A549 (cell line): ENCODE measurements at regions of chr6 and their contacts with region 1.

Region 1: DNA sequence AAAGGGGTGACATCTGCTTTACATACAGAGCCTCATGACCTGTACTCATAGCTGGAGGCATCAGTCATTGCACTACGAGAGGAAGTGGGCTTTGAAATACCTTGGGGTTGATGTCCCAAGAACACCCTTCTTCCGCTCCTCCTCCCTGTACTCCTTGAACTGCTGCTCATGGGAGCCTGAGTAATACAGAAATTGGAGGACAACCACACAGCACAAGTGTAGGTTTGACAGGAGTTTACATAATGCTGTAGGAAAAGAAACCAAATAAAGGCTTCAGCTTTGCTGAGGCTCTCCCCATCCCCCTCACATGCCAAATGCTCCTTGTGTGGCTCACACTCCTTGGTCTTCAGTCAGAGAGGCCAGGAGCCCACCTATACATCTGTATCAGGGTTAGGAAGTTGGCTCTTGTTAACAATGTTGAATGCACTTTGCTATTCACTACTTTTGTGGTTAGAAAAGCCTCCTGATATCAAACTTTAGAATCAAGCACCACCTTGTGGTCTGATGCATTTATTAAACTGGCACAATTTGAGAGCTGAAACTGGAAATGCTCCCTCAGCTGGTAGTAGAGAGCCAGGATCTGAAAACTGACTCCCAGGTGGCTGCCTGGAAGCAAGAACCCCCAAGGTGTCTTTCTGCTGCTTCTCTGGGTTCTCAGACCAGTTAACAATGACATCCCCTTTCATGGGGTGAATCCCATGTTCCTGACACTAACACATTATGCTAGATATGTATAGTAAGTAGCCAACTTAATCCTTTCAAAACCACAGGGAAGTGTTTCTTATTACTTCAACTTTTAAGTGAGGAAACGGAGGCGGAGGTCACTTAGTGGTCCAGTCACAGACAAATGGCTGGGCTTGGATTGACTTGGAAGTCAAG is 56.2 kb upstream of the EDN1 start:
- DNase-seq: peak; percentile 27 to 71
- ATAC-seq: peak; percentile 77 to 85
- H3K4me3 ChIP-seq: no peak overlapping the region
- H3K27ac ChIP-seq: peak overlapping the region in 1 of 2 experiments; percentile 53; a peak in 2 of 6 replicates
- H3K4me1 ChIP-seq: 0 out of 3 replicates have a peak, but pooled peaks cover 3% of the 10 kb centered on the region
- CTCF ChIP-seq: peak; percentile 87
- EP300 ChIP-seq: no peak
- POLR2A ChIP-seq: no peak
- RAD21 ChIP-seq: peak; percentile 78 to 80

Region 2: DNA sequence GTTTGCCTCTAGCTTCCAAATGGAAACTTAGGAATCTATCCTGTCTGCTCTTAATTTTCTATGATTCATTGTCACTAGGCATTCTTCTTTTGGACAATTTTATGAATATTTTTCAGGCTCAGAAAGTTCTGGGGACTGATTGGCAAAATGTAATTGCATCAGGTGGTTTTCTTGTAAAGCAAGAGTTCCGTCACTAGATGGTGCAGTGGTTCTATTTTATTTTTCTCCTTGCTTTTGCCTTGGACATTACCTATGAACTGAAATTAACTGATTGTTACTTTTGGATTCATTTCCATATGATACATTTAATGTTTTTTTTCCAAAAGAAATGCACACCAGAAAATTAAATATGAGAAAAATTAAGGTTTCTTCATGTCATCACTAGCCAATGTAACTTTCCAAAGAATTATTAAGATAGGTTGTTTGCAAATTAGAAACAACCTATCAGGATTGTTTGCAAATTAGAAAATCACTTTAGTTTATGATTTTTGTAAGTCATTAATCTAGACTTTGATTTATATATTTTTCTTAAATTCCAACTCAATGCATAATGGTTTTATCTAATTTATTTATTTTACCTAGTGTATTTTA is 648.4 kb before region 1 on chr6:
- CTCF ChIA-PET with region 1: interaction called, 17 read pairs
- POLR2A ChIA-PET with region 1: no interaction called
- DNase-seq: peak; percentile 28 to 58
- ATAC-seq: peak in 1 of 2 experiments; percentile 56; a peak in 2 of 6 replicates
- H3K4me3 ChIP-seq: no peak overlapping the region
- H3K27ac ChIP-seq: peak overlapping the region; percentile 60 to 77; a peak in 5 of 6 replicates
- H3K4me1 ChIP-seq: peaks cover 33% of the 10 kb centered on the region
- CTCF ChIP-seq: peak; percentile 72
- EP300 ChIP-seq: no peak
- POLR2A ChIP-seq: no peak
- RAD21 ChIP-seq: peak; percentile 80 to 87

Region 3: GRCh38 chr6:11653028-11653583 is 580.8 kb before region 1 on chr6:
- CTCF ChIA-PET with region 1: interaction called, 49 read pairs
- POLR2A ChIA-PET with region 1: no interaction called
- DNase-seq: peak; percentile 30 to 68
- ATAC-seq: peak; percentile 59 to 64; a peak in 5 of 6 replicates
- H3K4me3 ChIP-seq: no peak overlapping the region
- H3K27ac ChIP-seq: peak overlapping the region; percentile 80 to 89
- H3K4me1 ChIP-seq: peaks cover 51% of the 10 kb centered on the region
- CTCF ChIP-seq: no peak
- EP300 ChIP-seq: no peak
- POLR2A ChIP-seq: no peak
- RAD21 ChIP-seq: no peak

Region 4: DNA sequence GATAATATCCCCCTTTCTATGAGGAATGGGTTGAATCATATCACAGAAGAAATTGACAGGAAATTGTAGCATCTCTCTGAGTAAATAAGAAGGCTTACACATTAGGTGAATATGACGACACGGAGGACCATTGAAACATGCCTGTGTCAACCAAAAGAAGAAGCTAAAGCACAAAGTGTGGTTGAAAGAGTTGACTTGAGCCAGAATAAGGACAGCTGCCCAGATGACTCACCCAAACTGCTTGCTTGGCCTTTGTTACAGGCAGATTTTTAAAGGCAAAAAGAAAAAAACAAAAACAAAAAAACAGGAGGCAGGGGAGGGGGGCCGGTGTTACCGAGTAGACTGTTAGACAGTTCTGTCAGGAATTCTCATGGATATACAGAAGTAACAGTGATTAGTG is 73.6 kb before region 1 on chr6:
- CTCF ChIA-PET with region 1: interaction called, 10 read pairs
- POLR2A ChIA-PET with region 1: no interaction called
- DNase-seq: no peak
- ATAC-seq: no peak
- H3K4me3 ChIP-seq: no peak overlapping the region
- H3K27ac ChIP-seq: peak overlapping the region in 1 of 2 experiments; percentile 26; a peak in 1 of 6 replicates
- H3K4me1 ChIP-seq: peaks cover 8% of the 10 kb centered on the region; the same call in 1 of the 3 replicates
- CTCF ChIP-seq: no peak
- EP300 ChIP-seq: no peak
- POLR2A ChIP-seq: no peak
- RAD21 ChIP-seq: no peak

Region 5: GRCh38 chr6:12258196-12259075 is 24.5 kb after region 1 on chr6:
- CTCF ChIA-PET with region 1: no interaction called
- POLR2A ChIA-PET with region 1: no interaction called
- DNase-seq: no peak
- ATAC-seq: no peak
- H3K4me3 ChIP-seq: no peak overlapping the region
- H3K27ac ChIP-seq: no peak overlapping the region
- H3K4me1 ChIP-seq: peaks cover 19% of the 10 kb centered on the region; the same call in 2 of the 3 replicates
- CTCF ChIP-seq: no peak
- EP300 ChIP-seq: no peak
- POLR2A ChIP-seq: no peak
- RAD21 ChIP-seq: no peak

Region 6: DNA sequence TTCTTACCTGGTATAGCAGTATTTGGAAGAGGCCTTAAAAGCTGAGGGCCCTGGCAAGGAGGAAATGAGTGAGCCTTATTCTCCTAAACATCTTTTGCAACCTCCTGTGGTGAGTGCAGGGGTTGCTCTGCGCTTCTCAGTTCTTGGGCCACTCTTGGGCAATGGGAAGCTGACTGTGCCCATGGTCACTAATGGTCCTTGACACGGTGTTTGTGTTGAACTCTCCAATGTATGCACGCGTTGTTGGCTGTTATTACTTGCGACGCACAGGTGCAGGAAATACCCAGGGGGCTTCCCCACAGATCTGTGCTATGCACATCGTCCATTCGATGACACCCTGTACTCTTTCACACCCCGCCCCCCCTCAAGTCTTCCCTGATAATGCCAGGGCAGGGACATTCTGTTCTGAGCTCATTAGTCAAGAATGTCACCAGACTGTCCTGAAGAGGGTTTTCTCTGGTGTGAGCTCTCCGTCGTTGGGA is 135.9 kb after region 1 on chr6:
- CTCF ChIA-PET with region 1: no interaction called
- POLR2A ChIA-PET with region 1: no interaction called
- DNase-seq: peak in 1 of 2 experiments; percentile 66
- ATAC-seq: 0 out of 6 replicates have a peak, but pooled peaks of 1 of the 2 experiments have one; percentile 7
- H3K4me3 ChIP-seq: no peak overlapping the region
- H3K27ac ChIP-seq: peak overlapping the region; percentile 71 to 92
- H3K4me1 ChIP-seq: peaks cover 63% of the 10 kb centered on the region
- CTCF ChIP-seq: no peak
- EP300 ChIP-seq: no peak
- POLR2A ChIP-seq: no peak
- RAD21 ChIP-seq: no peak